Endothelial cell of umbilical vein (primary cell): ENCODE measurements at regions of chr6 and their contacts with region 1.

Region 1: DNA sequence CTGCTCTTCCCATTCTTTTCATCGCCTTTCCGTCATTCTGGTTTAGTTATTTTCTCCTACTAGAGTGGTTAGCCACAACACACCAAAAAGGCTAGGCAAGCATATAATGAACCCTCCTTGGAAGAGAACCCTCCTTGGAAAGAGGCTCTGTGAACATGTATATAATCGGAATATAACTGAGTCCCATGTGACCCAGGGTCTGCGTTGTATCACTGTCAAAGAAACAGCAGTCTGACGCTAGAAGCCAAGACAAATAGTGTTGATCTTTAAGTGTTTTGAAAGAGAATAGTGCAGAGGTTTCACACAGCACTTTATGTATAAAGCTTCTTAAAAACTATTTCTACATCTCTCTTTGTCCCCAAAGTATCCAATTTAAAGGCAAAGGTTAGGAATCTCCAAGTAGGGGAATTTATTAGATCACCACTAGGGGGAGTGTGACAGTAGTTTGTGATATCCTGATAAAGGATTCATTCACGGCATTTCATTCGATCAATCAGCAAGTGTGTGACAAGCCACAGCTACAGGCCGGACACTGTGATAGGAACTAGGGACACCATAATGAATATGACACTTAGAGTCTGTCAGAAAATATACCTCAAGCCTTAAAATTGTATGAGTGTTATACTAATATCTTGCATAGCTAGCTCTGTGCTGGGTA is 395.3 kb downstream of the CD109 start:
- DNase-seq: peak; percentile 57
- H3K4me3 ChIP-seq: no peak overlapping the region
- H3K27ac ChIP-seq: no peak overlapping the region
- H3K4me1 ChIP-seq: no peaks in the 10 kb centered on the region
- H3K27me3 ChIP-seq: no peaks in the 10 kb centered on the region
- CTCF ChIP-seq: peak; percentile 46 to 55
- POLR2A ChIP-seq: no peak

Region 2: DNA sequence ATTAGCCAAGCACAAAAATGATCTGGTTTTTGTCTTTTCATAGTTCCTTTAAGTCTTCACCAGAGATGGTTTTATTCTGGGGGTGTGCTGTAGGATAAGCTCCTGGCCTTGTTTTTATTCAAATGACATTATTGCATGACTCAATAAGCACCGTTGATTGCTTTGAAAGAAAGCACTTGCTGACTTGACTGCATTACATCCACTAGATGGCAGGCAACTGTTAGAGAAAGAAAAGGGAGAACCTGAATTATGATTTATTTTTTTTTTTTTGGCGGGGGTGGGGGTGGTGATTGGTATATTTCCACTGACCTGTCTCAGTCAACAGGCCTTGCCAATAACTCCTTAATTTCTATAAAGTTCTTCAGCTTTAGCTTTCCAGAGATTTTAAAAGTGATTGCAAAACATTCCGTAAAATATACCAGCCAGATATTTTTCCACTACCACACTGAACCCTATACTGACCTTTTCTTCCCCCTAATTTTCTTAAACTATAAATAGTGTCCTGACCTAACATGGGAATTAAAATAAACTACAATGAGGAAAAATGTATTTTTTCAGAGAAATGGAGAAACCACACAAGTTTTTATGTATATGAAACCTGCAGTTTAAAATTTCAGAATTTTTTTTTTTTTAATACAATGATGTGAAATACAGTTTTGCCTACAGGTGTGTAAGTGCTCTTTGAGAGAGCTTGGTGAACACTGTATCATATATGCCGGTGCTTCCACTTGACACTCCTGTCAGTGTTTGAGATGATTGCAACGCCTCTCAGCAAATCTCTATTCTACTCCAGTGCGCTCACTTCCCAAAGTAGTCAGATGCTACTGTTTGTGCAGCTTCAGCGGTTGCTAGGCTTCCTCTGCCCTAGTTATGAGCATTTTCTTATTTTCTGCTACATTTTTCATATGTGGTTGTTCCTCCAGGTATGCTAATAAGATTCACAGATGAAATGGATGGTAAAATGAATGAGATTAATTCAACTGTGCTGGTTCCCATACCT is 121.0 kb before region 1 on chr6:
- CTCF ChIA-PET with region 1: interaction called, 3 read pairs
- POLR2A ChIA-PET with region 1: no interaction called
- dilution Hi-C with region 1: no loop called
- intact Hi-C with region 1: loop called (anchors 5 kb)
- DNase-seq: peak; percentile 56
- H3K4me3 ChIP-seq: no peak overlapping the region
- H3K27ac ChIP-seq: no peak overlapping the region
- H3K4me1 ChIP-seq: peaks cover 8% of the 10 kb centered on the region
- H3K27me3 ChIP-seq: peaks cover 3 to 4% of the 10 kb centered on the region in 2 experiments
- CTCF ChIP-seq: peak; percentile 48 to 53
- POLR2A ChIP-seq: no peak

Region 3: DNA sequence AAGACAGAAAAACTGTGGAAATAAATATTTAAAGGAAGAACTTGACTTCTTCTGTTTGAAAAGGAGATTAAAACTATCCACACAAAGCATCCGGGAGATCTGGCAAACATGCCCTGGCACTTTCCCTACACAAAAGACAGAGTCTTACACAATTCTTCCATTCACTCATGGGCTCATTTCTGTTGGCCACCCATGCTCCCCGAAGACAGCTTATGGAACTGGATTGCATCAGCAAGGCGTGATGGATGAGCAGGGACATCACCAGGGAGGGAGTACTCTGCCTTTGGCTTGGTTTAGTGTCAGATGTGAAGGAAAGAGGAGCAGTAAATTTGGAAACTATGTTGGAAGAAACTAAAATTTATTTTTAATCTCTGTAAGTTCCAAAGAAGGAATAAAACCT is 15.9 kb before region 1 on chr6:
- CTCF ChIA-PET with region 1: interaction called, 14 read pairs
- POLR2A ChIA-PET with region 1: no interaction called
- dilution Hi-C with region 1: no loop called
- intact Hi-C with region 1: no loop called
- DNase-seq: no peak
- H3K4me3 ChIP-seq: no peak overlapping the region
- H3K27ac ChIP-seq: no peak overlapping the region
- H3K4me1 ChIP-seq: no peaks in the 10 kb centered on the region
- H3K27me3 ChIP-seq: peaks cover 4 to 8% of the 10 kb centered on the region in 2 experiments
- CTCF ChIP-seq: no peak
- POLR2A ChIP-seq: no peak

Region 4: GRCh38 chr6:74114428-74114827 is 23.2 kb after region 1 on chr6:
- CTCF ChIA-PET with region 1: interaction called, 10 read pairs
- POLR2A ChIA-PET with region 1: no interaction called
- dilution Hi-C with region 1: no loop called
- intact Hi-C with region 1: no loop called
- DNase-seq: no peak
- H3K4me3 ChIP-seq: no peak overlapping the region
- H3K27ac ChIP-seq: no peak overlapping the region
- H3K4me1 ChIP-seq: peaks cover 3% of the 10 kb centered on the region
- H3K27me3 ChIP-seq: peaks cover 0 to 6% of the 10 kb centered on the region in 2 experiments
- CTCF ChIP-seq: no peak
- POLR2A ChIP-seq: no peak

Region 5: DNA sequence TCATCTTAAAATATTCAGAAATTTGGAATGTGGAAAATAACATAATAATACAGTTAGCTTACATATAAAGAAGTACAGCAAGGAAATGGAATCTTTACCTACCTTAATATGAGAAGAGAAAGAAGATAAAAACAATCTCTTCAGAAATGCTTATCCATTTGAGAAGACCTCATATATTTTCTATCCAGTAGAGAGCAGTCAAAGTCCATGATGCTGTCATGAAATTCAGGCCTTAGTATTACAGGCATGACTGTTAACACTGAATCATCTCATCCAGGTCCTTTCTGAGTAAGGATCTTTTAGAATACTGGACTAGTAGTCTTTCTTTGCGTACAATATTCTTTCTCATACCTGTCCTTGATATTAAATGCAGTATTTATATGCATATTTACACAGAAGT is 318.2 kb after region 1 on chr6:
- CTCF ChIA-PET with region 1: interaction called, 7 read pairs
- POLR2A ChIA-PET with region 1: no interaction called
- dilution Hi-C with region 1: no loop called
- intact Hi-C with region 1: loop called (anchors 5 kb)
- DNase-seq: peak; percentile 77
- H3K4me3 ChIP-seq: no peak overlapping the region
- H3K27ac ChIP-seq: no peak overlapping the region
- H3K4me1 ChIP-seq: no peaks in the 10 kb centered on the region
- H3K27me3 ChIP-seq: no peaks in the 10 kb centered on the region
- CTCF ChIP-seq: peak; percentile 14 to 23
- POLR2A ChIP-seq: no peak